Left colon (tissue), 2 donors: ENCODE measurements at regions of chr9 and their contacts with region 1.

Region 1: GRCh38 chr9:1916655-1917054 is 98.5 kb upstream of the SMARCA2 start:
- DNase-seq: no peak
- ATAC-seq: no peak

Region 2: DNA sequence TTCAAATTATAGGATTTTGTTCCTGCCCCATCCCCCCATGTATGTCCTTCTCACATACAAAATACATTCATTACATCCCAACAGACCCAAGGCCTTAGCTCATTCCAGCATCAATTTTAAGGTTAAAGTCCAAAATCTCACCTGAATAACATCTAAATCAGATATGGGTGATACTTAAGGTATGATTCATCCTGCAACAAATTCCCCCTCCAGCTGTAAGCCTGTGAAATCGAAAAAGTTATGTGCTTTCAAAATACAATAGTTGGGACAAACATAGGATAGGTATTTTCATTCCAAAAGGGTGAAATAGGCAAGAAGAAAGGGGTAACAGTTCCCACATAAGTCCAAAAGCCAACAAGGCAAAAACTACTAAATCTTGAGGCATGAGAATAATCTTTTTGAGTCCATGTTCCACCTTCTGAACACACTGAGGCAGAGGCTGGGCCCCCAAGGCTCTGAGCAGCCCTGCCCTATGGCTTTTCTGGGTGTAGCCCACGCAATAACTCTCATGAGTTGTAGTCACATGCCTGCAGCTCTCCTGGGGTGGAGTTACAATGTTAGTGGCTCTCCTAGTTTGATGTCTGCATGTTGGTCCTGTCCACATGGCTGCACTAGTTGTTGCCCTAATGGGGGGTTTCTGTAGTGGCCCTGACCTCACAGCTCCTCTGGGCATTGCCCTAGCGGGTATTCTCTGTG is 145.4 kb before region 1 on chr9:
- intact Hi-C with region 1: no loop called
- DNase-seq: no peak
- ATAC-seq: no peak

Region 3: DNA sequence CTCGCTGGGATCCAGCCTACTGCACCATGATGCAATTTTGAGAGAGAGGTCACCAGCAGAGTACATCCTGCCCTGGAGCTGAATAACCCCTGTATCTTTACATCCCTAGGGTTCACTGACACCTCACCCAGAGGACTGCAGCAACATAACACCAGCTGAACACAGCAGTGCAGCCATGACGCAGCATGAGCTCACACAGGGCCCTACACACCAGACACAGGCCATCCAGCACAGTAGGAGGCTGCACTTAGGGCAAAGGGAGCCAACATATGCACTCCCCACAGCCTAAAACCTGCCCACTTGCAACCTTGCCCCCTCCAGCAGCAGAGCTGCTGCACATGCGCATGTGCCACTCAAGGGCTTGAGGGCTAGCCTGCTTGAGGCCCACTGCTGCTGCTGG is 58.8 kb before region 1 on chr9:
- intact Hi-C with region 1: loop called in 1 of 2 experiments (anchors 10 kb)
- DNase-seq: no peak
- ATAC-seq: no peak